ENCODE measurements at regions of chr13 and their contacts with region 1.

Region 1: GRCh38 chr13:48769107-48769704 is 115.5 kb downstream of the CYSLTR2 start:
- DNase-seq: peak in 2 of 3 donors; percentile 70 to 74
- ATAC-seq: peak; percentile 93 to 96
- H3K4me3 ChIP-seq: no peak overlapping the region
- H3K27ac ChIP-seq: no peak overlapping the region
- H3K4me1 ChIP-seq: peaks cover 2% of the 10 kb centered on the region
- H3K27me3 ChIP-seq: no peaks in the 10 kb centered on the region

Region 2: GRCh38 chr13:48126944-48127830 is 642.0 kb before region 1 on chr13:
- intact Hi-C with region 1: loop called in 1 of 4 experiments (anchors 10 kb)
- DNase-seq: peak; percentile 83 to 94 (median 92)
- ATAC-seq: peak; percentile 81 to 88
- H3K4me3 ChIP-seq: no peak overlapping the region
- H3K27ac ChIP-seq: peak overlapping the region; percentile 82
- H3K4me1 ChIP-seq: peaks cover 4% of the 10 kb centered on the region
- H3K27me3 ChIP-seq: no peaks in the 10 kb centered on the region

Region 3: GRCh38 chr13:48346583-48346982 is 422.6 kb before region 1 on chr13:
- intact Hi-C with region 1: loop called in 1 of 4 experiments (anchors 10 kb)
- DNase-seq: no peak
- ATAC-seq: no peak
- H3K4me3 ChIP-seq: no peak overlapping the region
- H3K27ac ChIP-seq: no peak overlapping the region
- H3K4me1 ChIP-seq: no peaks in the 10 kb centered on the region
- H3K27me3 ChIP-seq: no peaks in the 10 kb centered on the region

Region 4: GRCh38 chr13:48595431-48596429 is 173.5 kb before region 1 on chr13:
- intact Hi-C with region 1: loop called in 3 of 4 experiments (anchors 2 to 10 kb)
- DNase-seq: peak; percentile 63 to 75 (median 70)
- ATAC-seq: peak; percentile 92 to 93
- H3K4me3 ChIP-seq: no peak overlapping the region
- H3K27ac ChIP-seq: no peak overlapping the region
- H3K4me1 ChIP-seq: peaks cover 4% of the 10 kb centered on the region
- H3K27me3 ChIP-seq: no peaks in the 10 kb centered on the region

Region 5: GRCh38 chr13:48828962-48829421 is 59.8 kb after region 1 on chr13:
- intact Hi-C with region 1: no loop called
- DNase-seq: no peak
- ATAC-seq: no peak
- H3K4me3 ChIP-seq: no peak overlapping the region
- H3K27ac ChIP-seq: no peak overlapping the region
- H3K4me1 ChIP-seq: no peaks in the 10 kb centered on the region
- H3K27me3 ChIP-seq: no peaks in the 10 kb centered on the region

Measured in right cardiac atrium (tissue), 5 donors.